Colonic mucosa (tissue), 4 donors: ENCODE measurements at regions of chr1 and their contacts with region 1.

Region 1: DNA sequence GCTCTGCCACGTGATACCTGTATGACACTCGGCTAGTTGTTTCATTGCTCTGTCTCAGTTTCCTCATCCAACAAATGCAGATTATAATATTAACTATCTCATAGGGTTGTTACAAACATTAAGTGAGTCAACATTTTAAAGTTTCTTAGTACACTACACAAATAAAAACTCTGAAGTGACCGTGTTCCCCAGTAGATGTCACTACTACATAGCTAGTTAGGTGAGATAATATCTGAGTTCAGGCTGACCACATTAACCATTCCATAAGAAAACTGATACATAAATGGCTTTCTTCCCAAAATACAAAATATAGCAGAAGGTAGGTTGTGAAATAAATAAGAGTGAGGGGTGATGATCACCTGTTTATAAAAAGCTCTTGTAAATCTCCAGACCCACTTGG is 214.1 kb downstream of the NUF2 start:
- DNase-seq: no peak
- H3K4me3 ChIP-seq: no peak overlapping the region
- H3K27ac ChIP-seq: no peak overlapping the region
- H3K4me1 ChIP-seq: no peaks in the 10 kb centered on the region
- H3K27me3 ChIP-seq: no peaks in the 10 kb centered on the region
- CTCF ChIP-seq: no peak

Region 2: GRCh38 chr1:163195728-163196448 is 339.9 kb before region 1 on chr1:
- intact Hi-C with region 1: no loop called
- DNase-seq: no peak
- H3K4me3 ChIP-seq: no peak overlapping the region
- H3K27ac ChIP-seq: no peak overlapping the region
- H3K4me1 ChIP-seq: no peaks in the 10 kb centered on the region
- H3K27me3 ChIP-seq: no peaks in the 10 kb centered on the region
- CTCF ChIP-seq: no peak

Region 3: GRCh38 chr1:163399976-163400601 is 135.7 kb before region 1 on chr1:
- intact Hi-C with region 1: loop called (anchors 10 kb)
- DNase-seq: no peak
- H3K4me3 ChIP-seq: no peak overlapping the region
- H3K27ac ChIP-seq: no peak overlapping the region
- H3K4me1 ChIP-seq: no peaks in the 10 kb centered on the region
- H3K27me3 ChIP-seq: no peaks in the 10 kb centered on the region
- CTCF ChIP-seq: no peak

Region 4: GRCh38 chr1:163673759-163674151 is 137.9 kb after region 1 on chr1:
- intact Hi-C with region 1: no loop called
- DNase-seq: no peak
- H3K4me3 ChIP-seq: no peak overlapping the region
- H3K27ac ChIP-seq: no peak overlapping the region
- H3K4me1 ChIP-seq: no peaks in the 10 kb centered on the region
- H3K27me3 ChIP-seq: no peaks in the 10 kb centered on the region
- CTCF ChIP-seq: no peak